Activated naive CD4-positive, alpha-beta T cell treated with anti-CD3 and anti-CD28 coated beads for 36 hours (primary cell): ENCODE measurements at regions of chr1 and their contacts with region 1.

Region 1: DNA sequence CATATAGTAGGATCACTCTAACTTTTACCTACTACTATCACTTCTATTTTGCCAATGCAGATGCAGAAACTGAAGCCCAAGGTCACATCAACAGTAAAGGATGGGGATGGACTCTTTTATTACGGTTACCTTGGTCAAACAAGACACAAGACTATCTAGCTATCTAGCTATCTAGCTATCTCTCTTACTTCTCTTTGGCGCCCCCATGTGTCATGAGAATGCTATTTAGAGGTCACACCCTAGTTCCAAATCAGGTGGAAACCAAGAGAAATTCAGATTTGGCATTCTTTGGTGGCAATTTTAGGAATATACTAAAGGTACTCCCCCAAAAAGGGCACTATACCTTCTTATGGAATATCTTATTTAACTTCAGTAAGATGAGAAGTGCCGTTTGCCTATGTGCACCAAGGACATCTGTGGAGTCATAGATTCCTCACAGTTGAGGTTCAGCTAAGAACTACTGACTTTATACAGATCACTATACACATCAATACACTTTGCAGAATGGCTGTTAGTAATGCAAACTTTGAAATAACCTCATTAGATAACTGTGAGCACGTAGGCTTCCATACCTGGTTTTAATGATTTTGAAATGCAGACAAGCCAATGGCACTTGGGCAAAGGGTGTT is 6.7 kb downstream of the ZNF648 start:
- DNase-seq: peak; percentile 83
- H3K4me3 Mint-ChIP-seq: no peak overlapping the region
- H3K27ac Mint-ChIP-seq: no peak overlapping the region
- H3K4me1 Mint-ChIP-seq: peaks cover 12% of the 10 kb centered on the region
- H3K27me3 Mint-ChIP-seq: peaks cover 20% of the 10 kb centered on the region

Region 2: DNA sequence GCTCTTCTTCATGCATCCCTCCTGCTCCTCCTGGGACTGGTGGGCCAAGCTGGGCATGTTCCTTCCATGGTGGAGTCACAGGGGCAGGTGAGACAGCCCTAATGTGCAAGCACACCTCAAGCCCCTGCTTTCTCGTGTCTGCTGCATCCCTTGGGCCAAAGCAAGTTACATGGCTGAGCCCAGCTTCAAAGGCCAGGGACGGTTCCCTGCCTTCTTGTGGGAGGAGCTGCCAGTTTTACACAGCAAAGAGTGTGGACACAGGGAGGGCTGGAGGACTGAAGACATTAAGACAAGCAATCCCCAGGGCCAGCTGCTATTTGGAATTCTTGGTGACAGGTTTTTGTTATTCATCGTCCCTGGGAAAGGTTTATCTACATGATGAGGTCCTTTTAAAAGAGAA is 746.7 kb before region 1 on chr1:
- CTCF ChIA-PET with region 1: no interaction called
- intact Hi-C with region 1: no loop called
- DNase-seq: no peak
- H3K4me3 Mint-ChIP-seq: no peak overlapping the region
- H3K27ac Mint-ChIP-seq: no peak overlapping the region
- H3K4me1 Mint-ChIP-seq: no peaks in the 10 kb centered on the region
- H3K27me3 Mint-ChIP-seq: peaks cover 5% of the 10 kb centered on the region

Region 3: DNA sequence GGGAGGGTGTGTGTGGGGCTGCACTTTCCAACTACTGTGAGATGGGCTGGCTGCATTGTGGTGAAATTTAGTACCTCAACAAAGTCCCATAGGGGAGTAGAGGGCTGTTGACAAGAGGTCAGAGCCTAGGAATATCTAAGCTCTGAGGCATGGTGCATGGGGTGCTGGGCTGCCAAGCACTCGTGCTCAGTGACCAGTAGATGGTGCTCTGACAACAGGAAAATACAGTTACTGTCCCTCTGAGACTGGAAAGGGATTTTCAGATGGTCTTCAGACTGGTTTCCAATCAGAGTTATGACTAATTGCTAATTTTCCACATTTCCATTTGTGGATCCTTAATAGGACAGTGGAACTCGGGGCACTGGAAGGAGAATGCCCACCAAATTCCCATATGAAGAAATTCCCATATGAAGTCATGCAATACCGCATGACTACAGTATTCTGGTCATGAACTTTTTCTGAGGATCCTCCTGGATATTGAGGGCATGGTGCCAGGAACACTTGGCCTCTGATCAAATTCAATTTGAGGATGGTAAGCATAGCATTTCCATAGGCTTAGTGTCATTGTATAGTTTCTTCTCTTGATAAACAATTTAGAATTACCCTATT is 575.6 kb before region 1 on chr1:
- CTCF ChIA-PET with region 1: interaction called, 22 read pairs
- intact Hi-C with region 1: loop called (anchors 1 kb)
- DNase-seq: peak; percentile 34
- H3K4me3 Mint-ChIP-seq: no peak overlapping the region
- H3K27ac Mint-ChIP-seq: no peak overlapping the region
- H3K4me1 Mint-ChIP-seq: peaks cover 10% of the 10 kb centered on the region
- H3K27me3 Mint-ChIP-seq: peaks cover 25% of the 10 kb centered on the region

Region 4: DNA sequence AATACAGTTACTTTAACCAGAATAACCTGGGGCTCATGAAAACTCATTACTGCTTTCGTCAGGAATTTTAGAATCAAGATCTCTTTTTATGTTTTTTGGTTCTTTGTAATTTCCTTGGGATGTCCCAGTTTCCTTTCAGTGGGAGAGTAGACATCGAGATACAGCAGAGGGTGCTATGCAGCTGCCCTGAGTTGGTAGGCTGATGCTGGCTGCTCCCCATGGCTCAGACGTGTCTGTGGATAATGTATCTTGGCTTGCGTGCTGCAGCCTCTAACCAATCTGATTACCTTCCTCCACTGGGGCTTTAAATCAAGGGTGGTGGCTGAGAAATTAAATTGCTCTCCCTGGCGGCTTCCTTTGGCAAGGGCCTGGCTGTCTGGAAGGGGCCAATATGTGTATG is 317.8 kb before region 1 on chr1:
- CTCF ChIA-PET with region 1: no interaction called
- intact Hi-C with region 1: loop called (anchors 10 kb)
- DNase-seq: no peak
- H3K4me3 Mint-ChIP-seq: no peak overlapping the region
- H3K27ac Mint-ChIP-seq: no peak overlapping the region
- H3K4me1 Mint-ChIP-seq: no peaks in the 10 kb centered on the region
- H3K27me3 Mint-ChIP-seq: peaks cover 9% of the 10 kb centered on the region

Region 5: DNA sequence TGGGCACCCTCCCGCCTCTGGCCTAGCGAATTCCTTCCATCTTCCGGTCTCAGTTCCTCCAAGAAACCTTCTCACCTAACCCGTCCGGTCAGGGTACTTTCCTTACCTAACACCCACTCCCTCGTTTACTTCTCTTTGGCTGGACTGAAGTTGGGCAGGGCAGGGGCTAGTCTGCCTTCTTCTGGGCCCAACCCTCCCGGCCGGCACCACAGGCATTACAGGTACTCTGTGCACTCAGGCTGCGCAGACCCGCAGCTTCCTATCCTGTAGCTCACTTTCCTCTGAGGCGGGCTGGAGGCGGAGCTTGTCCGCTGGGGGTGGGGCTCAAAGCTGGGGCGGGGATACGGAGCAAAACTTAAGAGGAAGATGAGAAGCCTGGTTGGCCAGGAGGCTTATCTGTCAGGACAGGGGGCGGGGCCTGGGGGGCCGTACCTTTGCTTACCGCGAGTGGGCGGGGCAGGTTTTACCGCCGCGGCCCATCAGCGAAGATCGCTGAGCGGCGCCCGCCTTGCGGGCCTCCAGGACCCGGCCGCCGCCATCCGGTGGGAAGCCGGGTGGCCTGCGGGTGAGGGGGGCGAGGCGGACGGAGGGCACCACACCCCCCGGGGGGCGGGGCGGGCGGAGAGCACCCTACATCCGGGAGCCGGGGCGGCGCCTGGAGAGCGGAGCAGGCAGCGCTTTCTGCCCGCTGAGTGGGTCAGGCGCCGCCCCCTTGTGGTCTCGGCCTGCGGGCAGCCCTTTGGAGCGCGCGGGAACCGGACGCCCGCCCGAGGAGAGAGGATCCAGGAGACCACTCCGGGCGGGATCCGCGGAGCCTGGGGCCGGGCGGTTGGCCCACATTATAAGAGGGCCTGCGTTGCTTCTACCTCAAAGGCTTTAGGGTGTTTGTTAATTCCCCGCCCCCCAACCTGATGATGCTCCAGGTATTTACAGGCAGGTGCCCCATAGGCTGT is 25.2 kb before region 1 on chr1:
- CTCF ChIA-PET with region 1: interaction called, 7 read pairs
- intact Hi-C with region 1: loop called (anchors 1 kb)
- DNase-seq: peak; percentile 99
- H3K4me3 Mint-ChIP-seq: peak overlapping the region; percentile 95
- H3K27ac Mint-ChIP-seq: peak overlapping the region; percentile 95
- H3K4me1 Mint-ChIP-seq: peaks cover 9% of the 10 kb centered on the region
- H3K27me3 Mint-ChIP-seq: no peaks in the 10 kb centered on the region